ENCODE measurements at regions of chr17 and their contacts with region 1.

Region 1: DNA sequence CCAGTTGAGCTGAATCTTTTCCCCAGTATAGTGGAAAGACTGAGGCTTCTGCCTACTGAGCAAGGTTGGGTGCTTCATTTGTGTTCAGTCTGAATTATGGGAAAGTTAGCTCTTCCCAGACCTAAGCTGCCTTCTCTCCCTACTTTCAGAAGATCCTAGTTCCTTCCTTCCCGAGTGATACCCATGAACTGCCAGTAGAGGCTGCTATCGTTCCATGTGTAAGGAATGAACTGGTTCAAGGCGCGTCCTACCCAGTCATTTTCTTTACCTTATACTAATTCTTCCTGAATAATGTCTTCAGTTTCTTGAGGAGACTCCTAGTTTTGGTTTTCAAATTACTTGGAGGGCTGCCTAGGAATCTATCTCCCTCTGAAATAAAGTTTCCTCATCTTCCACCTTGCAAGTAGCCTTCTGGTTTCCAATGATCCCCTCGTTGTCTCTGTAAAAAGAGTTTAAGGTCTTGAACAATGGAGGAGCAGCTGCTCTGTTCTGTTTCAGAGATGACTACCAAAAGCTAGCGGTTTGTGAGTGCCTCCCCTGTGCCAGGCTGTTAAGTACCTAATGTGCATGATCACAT is 934 bp upstream of the AOC2 start:
- DNase-seq: no peak
- H3K4me3 ChIP-seq: no peak overlapping the region
- H3K27ac ChIP-seq: peak overlapping the region in 1 of 4 donors; percentile 46
- H3K4me1 ChIP-seq: peaks cover 0 to 4% (median 1%) of the 10 kb centered on the region in 4 donors
- H3K27me3 ChIP-seq: peaks cover 1% of the 10 kb centered on the region
- CTCF ChIP-seq: peak; percentile 89 to 94 (median 92)
- EP300 ChIP-seq: no peak
- POLR2A ChIP-seq: no peak

Region 2: DNA sequence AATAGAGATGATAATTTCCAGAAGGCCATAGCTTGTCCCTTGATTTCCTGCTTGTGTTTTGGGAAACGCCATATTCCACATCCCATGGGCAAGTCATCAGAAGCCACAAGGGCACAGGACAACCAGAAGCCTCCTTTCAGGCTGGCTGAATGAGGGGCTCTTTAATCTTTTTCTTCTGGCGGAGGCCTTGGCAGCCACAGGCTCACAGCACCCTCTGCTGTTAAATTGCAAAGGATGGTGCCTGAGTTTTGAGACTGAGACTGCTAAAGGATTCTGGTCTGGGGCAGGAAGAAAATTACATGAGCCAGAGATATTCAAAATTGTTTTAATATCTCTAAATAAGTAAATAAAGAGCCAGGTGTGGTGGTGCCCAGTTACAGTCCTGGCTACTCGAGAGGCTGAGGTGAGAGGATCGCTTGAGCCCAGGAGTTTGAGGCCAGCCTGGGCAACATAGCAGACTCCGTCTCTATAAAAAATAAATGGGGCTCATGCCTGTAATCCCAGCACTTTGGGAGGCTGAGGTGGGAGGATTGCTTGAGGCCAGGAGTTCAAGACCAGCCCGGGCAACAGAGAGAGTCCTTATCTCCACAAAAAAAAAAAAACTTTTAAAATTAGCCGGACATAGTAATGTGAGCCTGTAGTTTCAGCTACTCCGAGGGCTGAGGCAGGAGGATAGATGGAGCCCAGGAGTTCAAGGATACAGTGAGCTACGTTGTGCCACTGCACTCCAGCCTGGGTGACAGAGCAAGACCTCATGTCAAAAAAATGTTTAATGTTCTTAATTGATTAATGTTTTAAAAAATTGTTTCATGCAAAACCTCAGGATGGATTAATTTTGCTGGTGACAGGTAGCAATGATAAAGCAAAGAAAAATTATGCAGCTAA is 94.5 kb after region 1 on chr17:
- in situ Hi-C with region 1: loop called in 2 of 4 experiments (anchors 10 to 25 kb)
- intact Hi-C with region 1: loop called (anchors 5 kb)
- DNase-seq: peak; percentile 29
- H3K4me3 ChIP-seq: no peak overlapping the region
- H3K27ac ChIP-seq: no peak overlapping the region
- H3K4me1 ChIP-seq: no peaks in the 10 kb centered on the region
- H3K27me3 ChIP-seq: peaks cover 21% of the 10 kb centered on the region
- CTCF ChIP-seq: peak; percentile 45 to 61 (median 52)
- EP300 ChIP-seq: no peak
- POLR2A ChIP-seq: no peak

Measured in transverse colon (tissue), 4 donors.